Activated CD4-positive, alpha-beta memory T cell treated with anti-CD3 and anti-CD28 coated beads, Interleukin-2, amount 10 ng/mL, durations not matched to agents 7 days and 5 days (primary cell): ENCODE measurements at regions of chr3 and their contacts with region 1.

Region 1: DNA sequence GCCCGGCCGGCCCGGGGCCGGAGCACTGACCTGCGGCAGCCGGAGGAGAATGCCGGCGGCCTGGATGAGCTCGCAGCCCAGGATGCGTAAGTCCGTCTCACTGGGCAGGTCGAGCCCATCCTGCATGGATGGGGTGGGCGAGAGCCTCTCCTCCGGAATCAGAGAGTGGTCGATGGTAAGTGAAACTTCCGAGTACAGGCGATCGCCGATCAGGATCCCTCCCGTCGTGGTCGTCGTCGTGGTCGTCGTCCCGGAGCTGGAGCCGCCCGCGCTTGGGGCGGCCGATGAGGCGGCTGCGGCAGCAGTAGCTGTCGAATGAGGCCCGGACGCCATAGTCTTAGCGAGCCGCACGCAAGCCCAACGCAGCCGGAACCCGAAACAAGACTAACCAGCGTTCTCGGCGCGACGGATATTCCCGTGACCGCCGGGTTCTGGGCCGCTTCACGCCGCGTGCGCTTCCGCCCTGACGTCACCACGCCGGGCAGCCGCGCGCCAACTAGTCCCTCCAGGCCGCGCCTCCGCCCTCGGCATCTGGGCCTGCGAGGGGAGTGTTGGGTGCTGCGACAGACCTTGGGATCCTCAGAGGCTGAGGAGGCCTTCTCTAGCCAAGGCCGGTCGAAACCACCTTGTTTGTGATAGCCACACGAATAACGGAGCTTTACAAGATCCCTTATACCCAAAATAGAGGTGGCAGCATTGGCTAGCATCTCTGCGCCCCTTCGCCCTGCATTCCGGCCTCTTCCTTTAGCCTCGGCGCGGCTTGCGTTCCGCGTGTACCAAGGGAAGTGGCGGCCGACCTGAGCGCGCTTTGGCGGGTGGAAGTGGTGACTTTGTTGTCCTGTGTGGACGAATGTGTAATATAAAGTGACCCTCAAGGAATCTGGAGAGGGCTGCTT is at the start of gene CCNL1:
- DNase-seq: peak; percentile 96
- H3K4me3 Mint-ChIP-seq: peak within 1 kb of the TSS; percentile 100
- H3K27ac Mint-ChIP-seq: peak within 1 kb of the TSS; percentile 100
- H3K4me1 Mint-ChIP-seq: peaks cover 57% of the 10 kb centered on the region
- H3K27me3 Mint-ChIP-seq: no peaks in the 10 kb centered on the region
- total RNA-seq, gene CCNL1: 223 to 249 TPM

Region 2: DNA sequence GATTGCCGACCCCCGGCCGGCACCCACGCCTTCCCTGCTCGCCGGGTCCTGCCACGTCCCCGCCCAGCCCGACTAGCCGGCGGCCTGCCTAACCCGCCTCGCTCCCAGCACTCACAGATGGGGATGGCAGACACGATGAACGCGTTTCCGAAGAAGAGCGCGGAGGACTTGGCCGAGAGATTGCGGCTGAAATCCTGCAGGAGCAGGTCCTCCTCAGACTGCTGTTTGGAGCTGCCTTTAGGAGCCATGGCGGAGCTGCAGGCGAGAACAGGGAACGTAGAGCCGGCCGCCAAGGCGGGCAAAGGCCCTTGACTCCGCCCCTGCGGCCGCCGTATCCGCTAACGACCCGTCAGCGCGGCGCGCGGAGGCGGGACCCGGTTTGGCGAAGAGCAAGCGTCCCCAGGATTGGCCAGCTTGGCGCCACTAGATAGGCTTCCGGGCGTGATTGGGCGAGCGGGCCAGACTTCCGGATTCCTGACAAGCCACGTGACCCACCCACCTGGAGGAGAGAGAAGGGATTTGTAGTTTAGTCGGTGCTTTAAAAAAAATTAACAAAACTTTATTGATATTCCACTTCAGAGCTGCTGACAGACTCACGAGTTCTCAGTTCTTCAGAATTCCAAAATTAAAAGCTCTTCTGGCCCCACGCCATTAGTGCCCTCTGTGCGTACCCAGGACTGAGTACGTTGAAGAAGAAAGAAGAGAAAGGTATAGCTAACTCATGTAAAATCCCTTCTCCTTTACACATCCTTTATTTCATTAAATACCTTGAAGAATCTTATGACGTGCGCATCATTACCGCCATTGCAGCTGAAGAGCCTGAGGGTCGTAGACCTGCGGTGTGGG is 604.9 kb before region 1 on chr3 and contains the start of gene SSR3:
- CTCF ChIA-PET with region 1: no interaction called
- POLR2A ChIA-PET with region 1: interaction called, 30 read pairs
- DNase-seq: peak; percentile 99
- H3K4me3 Mint-ChIP-seq: peak within 1 kb of the TSS; percentile 96
- H3K27ac Mint-ChIP-seq: peak within 1 kb of the TSS; percentile 84
- H3K4me1 Mint-ChIP-seq: peaks cover 48% of the 10 kb centered on the region
- H3K27me3 Mint-ChIP-seq: no peaks in the 10 kb centered on the region
- total RNA-seq, gene SSR3: 167 to 174 TPM

Region 3: GRCh38 chr3:156816800-156817645 is 343.0 kb before region 1 on chr3:
- CTCF ChIA-PET with region 1: no interaction called
- POLR2A ChIA-PET with region 1: interaction called, 21 read pairs
- DNase-seq: peak; percentile 93
- H3K4me3 Mint-ChIP-seq: peak overlapping the region; percentile 86
- H3K27ac Mint-ChIP-seq: peak overlapping the region; percentile 96
- H3K4me1 Mint-ChIP-seq: peaks cover 71% of the 10 kb centered on the region
- H3K27me3 Mint-ChIP-seq: no peaks in the 10 kb centered on the region

Region 4: GRCh38 chr3:157021684-157022083 is 138.3 kb before region 1 on chr3:
- CTCF ChIA-PET with region 1: no interaction called
- POLR2A ChIA-PET with region 1: no interaction called
- DNase-seq: no peak
- H3K4me3 Mint-ChIP-seq: no peak overlapping the region
- H3K27ac Mint-ChIP-seq: no peak overlapping the region
- H3K4me1 Mint-ChIP-seq: peaks cover 5% of the 10 kb centered on the region
- H3K27me3 Mint-ChIP-seq: no peaks in the 10 kb centered on the region

Region 5: DNA sequence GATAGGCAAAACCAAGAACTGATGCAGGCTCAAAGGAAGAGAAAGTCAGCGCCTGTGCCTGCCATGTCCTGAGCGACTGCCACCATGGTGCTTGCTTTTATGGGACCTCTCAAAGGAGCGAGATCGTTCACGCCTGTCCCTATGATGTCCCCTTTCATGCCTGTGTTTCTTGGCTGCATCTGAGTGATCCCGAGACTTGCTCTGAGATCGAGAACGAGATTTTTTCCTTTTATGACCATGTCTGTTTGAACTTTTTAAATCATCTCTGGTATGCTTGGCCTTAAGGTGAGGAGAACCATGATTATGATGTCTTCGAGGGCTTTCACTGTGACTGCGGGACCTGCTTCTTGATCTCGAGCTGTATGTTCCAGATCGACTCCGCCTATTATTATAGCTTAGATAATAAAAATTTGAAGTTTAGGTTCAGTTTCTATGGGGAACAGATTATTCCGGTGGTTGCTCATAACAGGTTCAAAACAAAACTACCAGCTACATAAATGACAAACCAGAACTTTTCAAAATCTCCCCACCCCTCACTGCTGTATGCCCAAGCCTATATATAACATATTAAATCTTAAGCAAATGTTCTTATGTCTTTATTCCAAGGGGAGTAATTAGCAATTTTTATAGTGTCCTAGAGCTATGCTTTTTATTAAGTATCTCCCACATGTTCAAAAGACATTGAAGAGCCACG is 11.7 kb before region 1 on chr3:
- CTCF ChIA-PET with region 1: interaction called, 6 read pairs
- POLR2A ChIA-PET with region 1: interaction called, 80 read pairs
- DNase-seq: no peak
- H3K4me3 Mint-ChIP-seq: no peak overlapping the region
- H3K27ac Mint-ChIP-seq: peak overlapping the region; percentile 54
- H3K4me1 Mint-ChIP-seq: peaks cover 62% of the 10 kb centered on the region
- H3K27me3 Mint-ChIP-seq: no peaks in the 10 kb centered on the region

Region 6: DNA sequence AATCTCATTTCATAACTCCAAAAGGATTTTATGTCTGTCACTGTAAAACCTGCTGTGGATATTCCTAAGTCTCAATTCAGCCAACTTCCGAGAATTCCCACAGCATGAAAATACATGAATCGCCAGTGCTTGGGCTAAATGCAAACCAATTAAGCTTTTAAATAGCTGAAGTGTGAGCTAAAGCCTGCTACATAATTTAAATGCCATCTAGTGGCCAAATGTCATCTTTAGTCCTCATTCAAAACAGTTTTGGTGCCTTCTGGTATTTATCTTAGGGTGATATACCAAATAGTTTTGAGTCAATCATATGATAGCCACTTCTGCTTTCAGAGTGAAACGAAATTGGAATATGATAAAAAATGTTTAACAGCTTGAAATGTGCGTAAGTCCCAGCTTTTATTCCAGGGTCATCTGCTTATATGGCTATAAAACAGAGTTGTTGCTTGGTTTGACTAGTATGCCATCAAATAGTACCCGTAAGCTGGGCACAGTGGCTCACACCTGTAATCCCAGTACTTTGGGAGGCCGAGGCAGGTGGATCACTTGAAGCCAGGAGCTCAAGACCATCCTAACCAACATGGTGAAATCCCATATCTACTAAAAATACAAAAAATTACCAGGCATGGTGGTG is 41.8 kb after region 1 on chr3:
- CTCF ChIA-PET with region 1: interaction called, 15 read pairs
- POLR2A ChIA-PET with region 1: interaction called, 6 read pairs
- DNase-seq: no peak
- H3K4me3 Mint-ChIP-seq: no peak overlapping the region
- H3K27ac Mint-ChIP-seq: no peak overlapping the region
- H3K4me1 Mint-ChIP-seq: no peaks in the 10 kb centered on the region
- H3K27me3 Mint-ChIP-seq: peaks cover 7% of the 10 kb centered on the region

Region 7: GRCh38 chr3:157282261-157283191 is 122.5 kb after region 1 on chr3:
- CTCF ChIA-PET with region 1: no interaction called
- POLR2A ChIA-PET with region 1: no interaction called
- DNase-seq: no peak
- H3K4me3 Mint-ChIP-seq: no peak overlapping the region
- H3K27ac Mint-ChIP-seq: no peak overlapping the region
- H3K4me1 Mint-ChIP-seq: no peaks in the 10 kb centered on the region
- H3K27me3 Mint-ChIP-seq: no peaks in the 10 kb centered on the region